Panc1 (cell line): ENCODE measurements at regions of chr3 and their contacts with region 1.

Region 1: GRCh38 chr3:176939022-176939817 is 258.1 kb downstream of the TBL1XR1 start:
- DNase-seq: peak; percentile 66
- ATAC-seq: peak; percentile 99
- H3K4me3 ChIP-seq: no peak overlapping the region
- H3K27ac ChIP-seq: no peak overlapping the region
- H3K4me1 ChIP-seq: no peaks in the 10 kb centered on the region
- H3K27me3 ChIP-seq: no peaks in the 10 kb centered on the region
- CTCF ChIP-seq: peak; percentile 89

Region 2: DNA sequence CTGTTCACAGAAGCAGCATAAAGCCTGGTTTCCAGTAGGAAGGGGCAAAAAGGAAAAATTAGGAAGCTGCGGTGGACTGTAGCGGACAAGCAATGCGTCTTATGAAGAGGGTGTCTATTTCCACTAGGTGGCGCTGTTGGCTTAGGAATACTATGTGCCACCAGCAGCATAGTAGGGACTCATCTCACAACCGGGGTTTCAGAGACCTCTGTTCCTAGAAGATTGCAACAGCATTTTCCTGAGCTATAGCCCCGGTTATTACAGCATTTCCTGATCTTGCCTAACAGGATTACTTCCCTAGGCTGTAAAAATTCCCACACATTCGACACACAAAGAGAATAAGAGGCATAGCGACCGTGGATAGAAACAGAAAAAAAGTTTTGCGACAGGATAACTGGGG is 424.9 kb before region 1 on chr3:
- CTCF ChIA-PET with region 1: interaction called, 5 read pairs
- POLR2A ChIA-PET with region 1: no interaction called
- in situ Hi-C with region 1: no loop called
- intact Hi-C with region 1: loop called (anchors 1 kb)
- DNase-seq: peak; percentile 39
- ATAC-seq: peak; percentile 98
- H3K4me3 ChIP-seq: no peak overlapping the region
- H3K27ac ChIP-seq: peak overlapping the region; percentile 35
- H3K4me1 ChIP-seq: peaks cover 5% of the 10 kb centered on the region; the same call in 1 of the 2 replicates
- H3K27me3 ChIP-seq: no peaks in the 10 kb centered on the region
- CTCF ChIP-seq: peak; percentile 85

Region 3: DNA sequence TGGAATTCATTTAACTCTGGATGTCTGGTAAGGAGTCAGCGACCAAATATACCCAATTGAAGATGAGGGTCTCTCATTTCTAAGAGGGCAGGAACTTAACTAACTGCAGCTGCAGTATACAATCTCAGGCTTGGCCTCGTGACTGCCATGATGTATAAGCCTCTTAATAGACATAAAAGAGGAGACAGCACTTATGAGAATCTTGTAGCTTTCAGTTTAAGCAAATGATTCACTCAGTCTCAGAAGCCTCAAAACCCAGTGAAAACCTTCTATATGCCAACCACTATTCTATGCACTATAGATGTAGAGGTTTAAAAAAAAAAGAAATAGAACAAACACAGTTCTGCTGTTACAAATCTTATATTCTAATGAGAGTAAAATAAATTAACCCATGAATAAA is 255.8 kb before region 1 on chr3:
- CTCF ChIA-PET with region 1: no interaction called
- POLR2A ChIA-PET with region 1: no interaction called
- in situ Hi-C with region 1: no loop called
- intact Hi-C with region 1: loop called (anchors 10 kb)
- DNase-seq: no peak
- ATAC-seq: no peak
- H3K4me3 ChIP-seq: no peak overlapping the region
- H3K27ac ChIP-seq: no peak overlapping the region
- H3K4me1 ChIP-seq: no peaks in the 10 kb centered on the region
- H3K27me3 ChIP-seq: no peaks in the 10 kb centered on the region
- CTCF ChIP-seq: no peak

Region 4: DNA sequence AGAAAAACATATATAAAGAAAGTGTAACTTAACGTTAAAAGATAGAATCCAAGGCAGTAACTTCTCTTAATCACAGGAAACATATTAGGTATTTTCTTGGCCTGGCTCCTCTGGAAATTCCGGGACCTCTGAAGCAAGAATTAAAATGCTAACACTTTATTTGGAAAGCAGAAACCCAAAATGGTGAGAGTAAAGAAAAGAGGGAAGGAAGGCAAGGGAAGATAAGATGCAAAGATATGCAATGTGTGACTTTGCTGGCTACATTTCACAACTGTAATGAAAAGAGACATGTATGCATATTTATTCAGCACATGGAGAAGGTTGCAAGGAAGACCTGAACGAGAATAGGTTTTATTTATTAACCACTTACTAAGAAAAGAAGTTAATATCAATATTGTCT is 114.4 kb before region 1 on chr3:
- CTCF ChIA-PET with region 1: no interaction called
- POLR2A ChIA-PET with region 1: interaction called, 17 read pairs
- in situ Hi-C with region 1: no loop called
- intact Hi-C with region 1: no loop called
- DNase-seq: no peak
- ATAC-seq: no peak
- H3K4me3 ChIP-seq: no peak overlapping the region
- H3K27ac ChIP-seq: no peak overlapping the region
- H3K4me1 ChIP-seq: no peaks in the 10 kb centered on the region
- H3K27me3 ChIP-seq: no peaks in the 10 kb centered on the region
- CTCF ChIP-seq: no peak

Region 5: DNA sequence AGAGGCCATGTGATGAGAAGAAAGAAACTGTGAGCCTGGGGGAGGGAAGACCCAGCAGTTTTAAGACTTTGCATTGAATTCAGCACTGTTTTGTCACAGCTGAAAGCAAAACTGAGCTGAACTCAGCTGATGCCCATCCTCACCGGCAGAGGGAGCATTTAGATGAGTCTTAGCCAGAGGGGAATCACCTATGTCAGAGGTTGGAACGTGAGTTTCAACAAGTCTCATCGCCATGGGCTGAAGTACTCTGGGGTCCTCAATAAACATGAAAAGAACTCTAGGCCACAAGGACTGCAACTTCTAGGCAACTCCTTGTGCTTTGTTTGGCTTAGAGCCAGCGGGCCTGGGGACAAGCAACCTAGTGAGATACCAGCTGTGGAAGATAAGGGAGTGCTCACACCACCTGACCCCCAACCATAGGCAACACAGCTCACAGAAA is 66.4 kb before region 1 on chr3:
- CTCF ChIA-PET with region 1: no interaction called
- POLR2A ChIA-PET with region 1: no interaction called
- in situ Hi-C with region 1: no loop called
- intact Hi-C with region 1: loop called (anchors 5 kb)
- DNase-seq: peak; percentile 48
- ATAC-seq: peak; percentile 82
- H3K4me3 ChIP-seq: no peak overlapping the region
- H3K27ac ChIP-seq: no peak overlapping the region
- H3K4me1 ChIP-seq: no peaks in the 10 kb centered on the region
- H3K27me3 ChIP-seq: no peaks in the 10 kb centered on the region
- CTCF ChIP-seq: peak; percentile 78

Region 6: GRCh38 chr3:176906046-176906905 is 32.9 kb before region 1 on chr3:
- CTCF ChIA-PET with region 1: no interaction called
- POLR2A ChIA-PET with region 1: no interaction called
- in situ Hi-C with region 1: no loop called
- intact Hi-C with region 1: no loop called
- DNase-seq: no peak
- ATAC-seq: no peak
- H3K4me3 ChIP-seq: no peak overlapping the region
- H3K27ac ChIP-seq: no peak overlapping the region
- H3K4me1 ChIP-seq: no peaks in the 10 kb centered on the region
- H3K27me3 ChIP-seq: no peaks in the 10 kb centered on the region
- CTCF ChIP-seq: no peak

Region 7: DNA sequence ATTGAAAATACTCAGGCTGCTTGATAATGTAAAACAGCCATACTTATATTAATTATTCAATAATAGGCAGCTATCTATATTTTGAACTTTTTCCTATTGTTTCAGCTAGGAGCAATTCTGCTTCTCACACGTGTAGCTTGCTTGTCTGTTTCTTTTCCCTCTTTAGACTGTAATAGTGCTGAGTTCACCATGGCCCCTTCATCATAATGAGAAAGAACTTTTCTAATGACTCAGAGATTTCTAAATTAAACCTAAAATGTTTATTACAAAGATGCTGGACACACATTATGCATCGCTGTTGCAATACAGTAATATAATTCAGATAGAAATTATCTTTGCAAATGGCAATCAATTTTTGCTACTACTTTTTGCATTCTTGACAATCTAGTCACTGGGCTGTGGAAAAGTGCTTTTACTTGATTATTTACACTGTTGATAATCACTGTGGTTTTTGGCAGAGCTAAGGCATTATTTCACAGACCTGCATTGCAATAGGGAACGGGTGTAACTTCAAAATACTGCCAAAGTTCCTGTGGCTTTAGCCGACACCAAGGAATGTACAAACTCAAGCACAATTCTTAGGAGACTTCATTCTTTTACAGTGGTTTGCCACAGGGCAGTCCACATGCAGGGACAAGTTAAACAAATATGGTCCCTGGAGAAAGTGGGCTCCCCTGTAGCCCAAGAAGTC is 539.1 kb after region 1 on chr3:
- CTCF ChIA-PET with region 1: no interaction called
- POLR2A ChIA-PET with region 1: no interaction called
- in situ Hi-C with region 1: no loop called
- intact Hi-C with region 1: no loop called
- DNase-seq: peak; percentile 95
- ATAC-seq: peak; percentile 98
- H3K4me3 ChIP-seq: peak overlapping the region in 1 of 2 experiments; percentile 21; a peak in 1 of 4 replicates
- H3K27ac ChIP-seq: peak overlapping the region; percentile 93
- H3K4me1 ChIP-seq: peaks cover 40% of the 10 kb centered on the region
- H3K27me3 ChIP-seq: no peaks in the 10 kb centered on the region
- CTCF ChIP-seq: no peak